PC-3 (cell line): ENCODE measurements at regions of chr5 and their contacts with region 1.

Region 1: DNA sequence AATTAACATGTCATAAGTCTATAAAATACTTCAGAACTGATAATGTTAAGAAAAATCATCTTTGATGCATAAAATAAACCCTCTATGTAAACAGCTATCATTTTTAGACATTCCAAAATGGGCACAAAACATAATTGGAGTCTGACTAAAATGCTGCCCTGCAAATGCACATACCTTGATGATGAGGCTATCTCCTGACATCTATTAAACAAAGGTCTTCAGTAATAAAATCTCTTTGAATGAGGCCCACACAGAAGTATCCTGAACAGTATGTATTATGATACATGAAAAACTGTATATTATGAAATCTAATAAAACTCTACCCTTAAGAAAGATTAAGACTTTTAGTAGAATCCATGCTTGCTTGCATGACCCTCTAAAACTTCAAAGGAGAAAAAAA is 66.1 kb downstream of the FBXL17 start:
- DNase-seq: peak; percentile 73
- ATAC-seq: peak; percentile 100
- H3K4me3 ChIP-seq: no peak overlapping the region
- H3K27ac ChIP-seq: peak overlapping the region; percentile 23; the same call in 1 of the 2 replicates
- H3K4me1 ChIP-seq: peaks cover 12% of the 10 kb centered on the region
- H3K27me3 ChIP-seq: no peaks in the 10 kb centered on the region
- CTCF ChIP-seq: no peak

Region 2: DNA sequence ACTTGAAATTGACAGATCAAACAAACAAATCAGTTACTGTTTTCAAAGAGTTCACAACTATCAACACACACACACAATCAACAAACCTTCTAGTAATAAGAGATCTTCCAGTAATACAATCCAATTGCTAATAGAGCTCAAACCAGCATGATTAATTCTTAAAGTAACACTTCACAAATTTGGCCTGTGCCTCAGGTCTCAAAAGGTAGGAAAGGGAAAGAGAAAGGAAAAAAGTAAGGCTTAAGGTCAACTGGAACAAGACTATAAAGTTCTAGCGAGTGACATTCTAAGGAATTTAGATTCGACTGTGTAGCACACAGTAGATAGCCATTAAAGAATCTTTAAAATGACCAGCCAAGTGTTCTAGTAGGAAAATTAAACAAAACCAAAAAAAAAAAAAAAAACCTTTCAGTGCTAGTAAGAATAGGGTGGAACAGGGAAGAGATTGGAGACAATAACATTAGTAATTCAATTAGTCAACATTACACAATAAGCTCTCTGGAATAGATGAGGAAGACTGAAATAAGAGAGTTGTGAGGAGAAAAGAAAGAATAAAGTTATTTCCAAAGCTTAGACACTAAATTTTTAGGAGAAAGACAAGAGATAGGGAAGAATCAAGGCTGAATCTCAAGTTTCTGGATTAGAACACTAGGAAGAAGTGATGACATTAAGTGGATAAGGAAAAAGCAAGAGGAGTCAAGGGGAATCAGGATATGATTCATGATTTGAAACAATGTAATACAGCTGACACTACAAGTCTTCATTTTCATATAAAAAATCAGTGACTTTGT is 20.1 kb before region 1 on chr5:
- CTCF ChIA-PET with region 1: no interaction called
- POLR2A ChIA-PET with region 1: no interaction called
- intact Hi-C with region 1: loop called (anchors 2 kb)
- DNase-seq: peak; percentile 55
- ATAC-seq: peak; percentile 80
- H3K4me3 ChIP-seq: no peak overlapping the region
- H3K27ac ChIP-seq: peak overlapping the region; percentile 27
- H3K4me1 ChIP-seq: peaks cover 17% of the 10 kb centered on the region
- H3K27me3 ChIP-seq: no peaks in the 10 kb centered on the region
- CTCF ChIP-seq: no peak

Region 3: DNA sequence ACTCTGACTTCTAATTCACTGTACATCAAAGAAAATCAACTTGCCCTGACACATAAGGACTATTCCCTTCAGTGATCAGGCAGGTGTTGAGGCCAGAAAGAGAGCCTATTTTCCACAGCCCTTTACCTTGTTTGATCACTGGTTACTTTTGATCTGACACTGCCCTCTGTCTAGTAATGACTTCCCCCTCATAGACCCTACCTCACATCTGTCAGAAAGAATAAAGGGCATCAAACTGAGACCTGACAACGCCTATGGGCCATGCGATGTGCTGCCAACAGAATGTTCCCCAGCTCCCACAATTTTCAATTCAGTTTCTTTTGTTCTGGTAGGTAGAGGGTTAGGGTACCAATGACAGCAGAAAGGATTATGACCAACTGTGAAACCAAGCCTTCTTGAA is 18.4 kb after region 1 on chr5:
- CTCF ChIA-PET with region 1: no interaction called
- POLR2A ChIA-PET with region 1: no interaction called
- intact Hi-C with region 1: loop called (anchors 2 kb)
- DNase-seq: no peak
- ATAC-seq: no peak
- H3K4me3 ChIP-seq: no peak overlapping the region
- H3K27ac ChIP-seq: no peak overlapping the region
- H3K4me1 ChIP-seq: peaks cover 6% of the 10 kb centered on the region; the same call in 1 of the 2 replicates
- H3K27me3 ChIP-seq: no peaks in the 10 kb centered on the region
- CTCF ChIP-seq: no peak